PC-3 (cell line): ENCODE measurements at regions of chr3 and their contacts with region 1.

Region 1: GRCh38 chr3:71258116-71258515 is 325.4 kb downstream of the FOXP1 start:
- DNase-seq: peak; percentile 86
- ATAC-seq: peak; percentile 88
- H3K4me3 ChIP-seq: no peak overlapping the region
- H3K27ac ChIP-seq: peak overlapping the region; percentile 47
- H3K4me1 ChIP-seq: peaks cover 32% of the 10 kb centered on the region
- H3K27me3 ChIP-seq: no peaks in the 10 kb centered on the region
- CTCF ChIP-seq: no peak

Region 2: GRCh38 chr3:71244826-71245488 is 13.2 kb before region 1 on chr3:
- CTCF ChIA-PET with region 1: no interaction called
- POLR2A ChIA-PET with region 1: interaction called, 10 read pairs
- intact Hi-C with region 1: no loop called
- DNase-seq: peak; percentile 13
- ATAC-seq: peak; percentile 82
- H3K4me3 ChIP-seq: peak overlapping the region; percentile 16; the same call in 1 of the 2 replicates
- H3K27ac ChIP-seq: no peak overlapping the region
- H3K4me1 ChIP-seq: peaks cover 11% of the 10 kb centered on the region
- H3K27me3 ChIP-seq: no peaks in the 10 kb centered on the region
- CTCF ChIP-seq: no peak

Region 3: GRCh38 chr3:71310980-71311660 is 53.0 kb after region 1 on chr3:
- CTCF ChIA-PET with region 1: no interaction called
- POLR2A ChIA-PET with region 1: no interaction called
- intact Hi-C with region 1: no loop called
- DNase-seq: no peak
- ATAC-seq: no peak
- H3K4me3 ChIP-seq: no peak overlapping the region
- H3K27ac ChIP-seq: no peak overlapping the region
- H3K4me1 ChIP-seq: peaks cover 4% of the 10 kb centered on the region
- H3K27me3 ChIP-seq: no peaks in the 10 kb centered on the region
- CTCF ChIP-seq: no peak